SK-N-SH (cell line): ENCODE measurements at regions of chrX and their contacts with region 1.

Region 1: GRCh38 chrX:84907324-84907968 is 96.2 kb upstream of the APOOL start:
- DNase-seq: peak; percentile 1
- H3K4me3 ChIP-seq: no peak overlapping the region
- H3K27ac ChIP-seq: no peak overlapping the region
- H3K4me1 ChIP-seq: no peaks in the 10 kb centered on the region
- H3K27me3 ChIP-seq: no peaks in the 10 kb centered on the region; the same call in 1 of the 2 replicates
- CTCF ChIP-seq: peak; percentile 60
- EP300 ChIP-seq: no peak
- RAD21 ChIP-seq: peak; percentile 54

Region 2: GRCh38 chrX:83916525-83916924 is 990.9 kb before region 1 on chrX:
- CTCF ChIA-PET with region 1: interaction called, 11 read pairs
- POLR2A ChIA-PET with region 1: no interaction called
- DNase-seq: peak; percentile 22
- H3K4me3 ChIP-seq: no peak overlapping the region; a peak in 1 of 4 replicates
- H3K27ac ChIP-seq: no peak overlapping the region
- H3K4me1 ChIP-seq: no peaks in the 10 kb centered on the region
- H3K27me3 ChIP-seq: no peaks in the 10 kb centered on the region
- CTCF ChIP-seq: peak; percentile 76
- EP300 ChIP-seq: no peak
- RAD21 ChIP-seq: peak; percentile 62

Region 3: GRCh38 chrX:84729809-84730208 is 177.6 kb before region 1 on chrX:
- CTCF ChIA-PET with region 1: interaction called, 11 read pairs
- POLR2A ChIA-PET with region 1: no interaction called
- DNase-seq: peak; percentile 30
- H3K4me3 ChIP-seq: peak overlapping the region in 1 of 2 experiments; percentile 36; a peak in 1 of 4 replicates
- H3K27ac ChIP-seq: no peak overlapping the region
- H3K4me1 ChIP-seq: no peaks in the 10 kb centered on the region
- H3K27me3 ChIP-seq: no peaks in the 10 kb centered on the region
- CTCF ChIP-seq: peak; percentile 93
- EP300 ChIP-seq: no peak
- RAD21 ChIP-seq: peak; percentile 80